Motor neuron (in vitro differentiated cells): ENCODE measurements at regions of chr20 and their contacts with region 1.

Region 1: DNA sequence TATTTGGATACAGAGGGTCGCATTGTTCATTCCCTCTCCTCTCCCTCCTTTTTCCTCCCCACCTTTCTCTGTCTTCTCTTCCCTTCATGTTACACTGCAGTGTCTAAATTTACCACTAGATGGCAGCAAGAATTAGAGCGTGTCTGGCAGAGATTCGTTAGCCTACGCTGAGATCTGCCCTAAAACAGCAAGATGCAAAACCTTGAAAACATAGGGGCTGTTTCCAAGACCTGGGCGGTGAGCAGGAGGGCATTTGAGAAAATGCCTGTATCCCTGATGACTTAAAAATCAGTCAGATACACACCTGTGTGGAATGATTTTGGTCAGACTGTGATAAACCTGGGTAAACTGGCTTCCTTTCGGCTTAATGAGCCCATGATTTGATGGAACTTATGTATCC is 101.5 kb upstream of the ISM1 start:
- ATAC-seq: peak; percentile 61 to 97 (median 79)
- H3K4me3 ChIP-seq: no peak overlapping the region
- H3K27ac ChIP-seq: no peak overlapping the region
- H3K4me1 ChIP-seq: peaks cover 0 to 2% of the 10 kb centered on the region in 2 donors

Region 2: DNA sequence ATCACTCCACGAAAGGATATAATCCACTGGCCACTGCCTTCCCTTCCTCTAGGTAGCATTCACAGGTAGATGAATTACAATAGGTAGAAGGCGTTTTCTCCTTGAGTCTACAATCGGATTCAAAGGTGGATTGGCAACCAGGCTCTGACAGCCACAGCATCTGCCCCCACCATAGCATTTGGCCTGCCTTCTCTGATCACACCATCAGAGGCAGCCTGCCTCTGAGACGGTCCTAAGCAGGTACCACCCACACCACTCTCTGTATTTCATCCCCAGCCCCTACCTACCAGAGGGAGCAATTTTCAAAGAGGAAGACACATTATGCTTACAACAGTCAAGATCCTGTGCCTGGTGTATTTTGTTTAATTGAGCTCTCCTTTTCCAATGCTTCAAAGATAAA is 321.3 kb before region 1 on chr20:
- in situ Hi-C with region 1: no loop called
- ATAC-seq: no peak
- H3K4me3 ChIP-seq: no peak overlapping the region
- H3K27ac ChIP-seq: no peak overlapping the region
- H3K4me1 ChIP-seq: no peaks in the 10 kb centered on the region

Region 3: DNA sequence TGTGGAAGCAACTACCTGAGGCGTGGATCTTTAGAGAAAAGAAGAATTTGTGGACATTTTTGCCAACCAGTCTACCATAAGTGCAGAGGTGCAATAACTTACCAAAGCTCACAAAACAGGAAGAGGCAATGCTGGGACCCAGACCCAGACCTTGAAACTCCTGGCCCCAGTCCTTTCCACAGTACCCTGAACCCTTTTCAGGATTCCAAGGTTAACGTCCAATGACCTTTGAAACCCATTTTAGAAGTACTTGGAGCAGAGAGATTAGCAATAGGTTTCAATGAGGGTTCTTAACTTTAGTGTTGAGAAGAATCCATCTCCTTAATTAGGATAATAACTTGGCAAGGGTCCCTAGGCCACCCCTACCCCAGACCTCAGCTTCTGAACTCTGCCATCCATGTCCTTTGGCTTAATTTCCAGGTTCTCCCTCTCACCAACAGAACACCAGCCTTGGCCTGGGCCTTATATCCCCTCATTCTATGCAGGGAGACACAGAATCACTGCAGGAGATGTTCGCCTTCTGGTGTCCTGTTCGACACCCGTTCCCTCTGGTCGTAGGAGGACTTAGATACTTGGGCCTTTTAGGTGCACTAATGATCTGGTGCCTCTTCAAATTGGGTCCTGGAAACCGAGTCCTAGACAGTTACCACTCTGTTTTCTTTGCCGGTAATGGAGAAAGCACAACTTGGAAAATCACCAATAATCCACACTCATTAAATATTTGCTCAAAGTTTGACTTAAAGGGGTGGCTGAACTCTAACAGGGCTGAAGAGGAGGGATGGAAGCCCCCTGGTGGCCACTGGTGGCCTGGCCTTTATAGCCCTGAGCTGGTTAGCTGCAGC is 142.1 kb after region 1 on chr20:
- in situ Hi-C with region 1: loop called in 2 of 9 experiments (anchors 5 to 25 kb)
- ATAC-seq: peak in 6 of 8 experiments; percentile 52 to 99 (median 89)
- H3K4me3 ChIP-seq: no peak overlapping the region
- H3K27ac ChIP-seq: no peak overlapping the region
- H3K4me1 ChIP-seq: peaks cover 0 to 9% of the 10 kb centered on the region in 2 donors

Region 4: DNA sequence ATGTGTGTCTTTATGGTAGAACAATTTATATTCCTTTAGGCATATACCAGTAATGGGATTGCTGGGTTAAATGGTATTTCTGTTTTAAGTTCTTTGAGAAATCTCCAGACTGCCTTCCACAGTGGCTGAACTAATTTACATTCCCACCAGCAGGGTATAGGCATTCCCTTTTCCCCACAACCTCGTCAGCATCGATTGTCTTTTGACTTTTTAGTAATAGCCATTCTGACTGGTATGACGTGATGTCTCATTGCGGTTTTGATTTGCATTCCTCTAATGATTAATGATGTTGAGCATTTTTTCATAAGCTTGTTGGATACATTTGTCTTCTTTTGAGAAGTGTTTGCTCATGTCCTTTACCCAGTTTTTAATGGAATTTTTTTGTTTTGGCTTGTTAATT is 524.4 kb after region 1 on chr20:
- in situ Hi-C with region 1: no loop called
- ATAC-seq: peak in 1 of 8 experiments; percentile 12
- H3K4me3 ChIP-seq: no peak overlapping the region
- H3K27ac ChIP-seq: no peak overlapping the region
- H3K4me1 ChIP-seq: peaks cover 0 to 3% of the 10 kb centered on the region in 2 donors

Region 5: GRCh38 chr20:13784893-13785715 is 665.5 kb after region 1 on chr20 and contains the starts of genes ESF1 and NDUFAF5:
- in situ Hi-C with region 1: loop called in 1 of 9 experiments (anchors 25 kb)
- ATAC-seq: peak; percentile 91 to 99 (median 96)
- H3K4me3 ChIP-seq: peak within 1 kb of the TSS; percentile 54 to 94 (median 66)
- H3K27ac ChIP-seq: peak within 1 kb of the TSS; percentile 68 to 74
- H3K4me1 ChIP-seq: peaks cover 13 to 20% of the 10 kb centered on the region in 2 donors
- total RNA-seq, gene ESF1: 13.9 to 29.6 (median 21.8) TPM
- total RNA-seq, gene NDUFAF5: 17.4 to 33.3 (median 29.4) TPM